RWPE1 (cell line): ENCODE measurements at regions of chr3 and their contacts with region 1.

Region 1: DNA sequence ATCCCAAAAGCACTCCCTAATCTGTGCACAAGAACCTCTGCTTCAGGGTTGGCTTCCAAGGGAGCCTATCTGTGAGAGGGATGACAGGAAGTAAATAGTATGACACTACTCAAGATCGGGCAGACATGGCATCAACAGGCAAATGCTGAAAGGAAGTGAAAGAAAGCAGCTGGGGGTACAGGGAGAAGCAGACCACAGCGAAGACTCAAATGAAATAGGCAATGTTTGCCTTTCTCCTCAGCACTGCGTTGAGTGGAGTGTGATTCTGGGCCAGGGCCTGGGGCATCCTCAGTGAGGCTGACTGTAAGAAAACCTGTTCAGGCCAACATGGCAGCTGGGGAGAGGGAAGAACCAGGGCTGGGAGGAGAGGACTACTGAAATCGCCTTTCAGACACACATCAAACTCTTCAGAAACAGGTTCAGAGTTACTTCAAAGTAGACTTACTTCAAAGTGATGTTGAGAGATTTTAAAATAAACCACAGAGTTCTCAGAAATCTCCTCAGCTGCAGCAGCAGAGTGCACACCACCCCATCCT is 96.6 kb downstream of the SLC9A9 start:
- DNase-seq: no peak
- H3K27ac ChIP-seq: no peak overlapping the region
- CTCF ChIP-seq: no peak

Region 2: DNA sequence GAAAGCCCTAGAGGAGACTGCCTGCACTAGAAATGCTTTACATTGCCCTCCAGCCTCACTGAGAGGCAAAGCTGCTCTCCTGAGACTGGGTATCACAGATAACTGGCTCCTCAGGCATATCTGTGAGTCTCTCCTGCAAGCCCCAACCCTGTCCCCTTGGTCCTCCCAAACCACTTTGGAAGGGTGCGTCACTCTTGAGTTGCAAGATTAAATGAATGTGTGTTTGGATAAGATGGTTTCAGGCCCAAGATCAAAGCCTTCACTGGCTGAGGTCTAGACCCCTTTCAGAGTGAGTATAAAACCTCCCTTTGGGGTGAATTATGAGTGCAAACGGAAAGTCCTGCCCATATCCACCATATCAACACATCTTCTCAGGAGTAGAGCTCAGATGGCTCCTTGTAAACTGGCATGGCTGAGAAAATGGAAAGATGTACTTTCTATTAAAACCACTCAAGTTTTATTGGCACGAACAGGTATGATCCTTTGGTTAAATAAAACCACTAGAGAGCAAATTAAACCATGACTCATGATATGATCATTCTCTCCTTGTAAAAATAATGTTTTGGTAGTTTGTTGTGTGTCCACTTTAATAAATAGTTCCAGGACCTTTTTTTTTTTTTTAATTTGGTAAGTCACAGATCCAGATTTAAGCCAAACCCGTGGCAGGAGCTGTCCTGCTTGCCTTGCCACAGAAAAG is 468.1 kb before region 1 on chr3:
- CTCF ChIA-PET with region 1: interaction called, 10 read pairs
- POLR2A ChIA-PET with region 1: no interaction called
- DNase-seq: peak; percentile 56
- H3K27ac ChIP-seq: peak overlapping the region; percentile 47
- CTCF ChIP-seq: no peak

Region 3: DNA sequence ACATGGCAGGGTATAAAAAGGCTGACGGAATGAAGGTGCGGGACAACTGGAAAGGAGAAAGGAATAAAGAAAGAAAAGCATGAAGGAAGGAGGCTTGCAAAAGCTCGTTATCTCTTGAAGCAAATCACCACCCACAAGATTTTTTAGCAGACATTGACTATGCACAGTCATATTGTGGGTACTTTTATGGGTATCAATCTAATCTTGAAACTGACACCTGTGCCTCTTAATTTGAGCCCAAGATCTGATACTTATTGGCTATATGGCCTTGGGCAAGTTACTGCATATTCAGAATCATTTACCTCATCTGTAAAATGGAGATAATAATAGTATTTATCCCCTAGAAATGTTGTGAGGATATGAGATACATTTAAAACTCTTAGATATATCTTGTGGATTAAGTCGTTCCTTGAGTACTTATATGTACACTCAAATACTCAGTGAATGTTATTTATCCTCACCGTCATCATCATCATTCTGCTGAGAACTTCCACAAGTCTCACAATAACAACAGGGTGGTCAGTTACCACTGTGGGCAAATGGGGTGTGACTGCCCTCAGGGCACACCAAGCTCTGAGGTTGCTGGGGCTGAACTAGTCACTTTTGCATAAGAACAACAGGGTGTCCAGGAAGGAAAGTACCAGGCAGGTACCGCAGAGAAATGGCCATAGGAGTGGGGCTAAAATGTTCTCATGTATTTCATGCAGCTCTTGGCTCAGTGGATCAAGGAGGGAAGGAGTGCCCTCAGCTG is 169.6 kb before region 1 on chr3:
- CTCF ChIA-PET with region 1: no interaction called
- POLR2A ChIA-PET with region 1: no interaction called
- DNase-seq: no peak
- H3K27ac ChIP-seq: no peak overlapping the region
- CTCF ChIP-seq: no peak